ENCODE measurements at regions of chr19 and their contacts with region 1.

Region 1: DNA sequence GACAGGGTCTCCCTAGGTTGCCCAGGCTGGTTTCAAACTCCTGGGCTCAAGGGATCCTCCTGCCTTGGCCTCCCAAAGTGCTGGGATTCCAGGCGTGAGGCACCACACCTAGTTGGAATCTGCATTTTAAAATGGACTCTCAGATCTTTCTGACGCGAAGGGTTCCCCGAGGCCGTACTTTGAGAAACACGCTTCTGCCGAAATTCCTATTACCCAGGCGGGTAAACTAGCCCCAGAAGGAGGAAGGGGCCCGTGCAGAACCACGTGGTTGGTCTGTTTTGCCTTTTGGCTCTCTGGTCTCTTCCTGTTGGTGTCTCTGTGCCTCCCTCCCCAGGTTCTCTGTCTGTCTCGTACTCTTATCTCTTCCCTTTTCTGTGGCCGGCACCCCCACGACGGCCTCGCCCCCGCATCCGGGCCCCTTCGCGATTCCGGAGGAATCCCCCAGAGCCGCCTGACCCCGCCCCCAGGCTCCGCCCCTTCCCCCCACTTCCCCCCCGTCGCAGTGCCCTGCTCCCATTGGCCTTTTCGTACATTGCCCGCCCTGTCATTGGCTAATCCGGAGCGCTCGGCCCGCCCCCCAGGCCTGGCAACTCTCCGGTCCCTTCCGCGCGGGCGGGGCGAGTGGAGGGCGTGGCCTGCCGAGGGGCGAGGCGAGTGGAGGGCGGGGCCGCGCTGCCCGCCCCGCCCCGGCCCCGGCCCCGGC is at the start of gene TNFAIP8L1:
- DNase-seq: peak; percentile 98 to 99
- ATAC-seq: peak; percentile 93 to 99 (median 94)
- H3K4me3 ChIP-seq: peak within 1 kb of the TSS; percentile 78
- H3K4me3 Mint-ChIP-seq: peak within 1 kb of the TSS; percentile 96
- H3K27ac ChIP-seq: peak within 1 kb of the TSS; percentile 91
- H3K27ac Mint-ChIP-seq: peak within 1 kb of the TSS; percentile 94 to 99
- H3K4me1 ChIP-seq: peaks cover 42% of the 10 kb centered on the region
- H3K4me1 Mint-ChIP-seq: peaks cover 9 to 26% of the 10 kb centered on the region in 2 donors
- H3K27me3 ChIP-seq: no peaks in the 10 kb centered on the region
- H3K27me3 Mint-ChIP-seq: no peaks in the 10 kb centered on the region
- CTCF ChIP-seq: no peak
- total RNA-seq, gene TNFAIP8L1: 8.5 to 13.5 (median 13.3) TPM

Region 2: DNA sequence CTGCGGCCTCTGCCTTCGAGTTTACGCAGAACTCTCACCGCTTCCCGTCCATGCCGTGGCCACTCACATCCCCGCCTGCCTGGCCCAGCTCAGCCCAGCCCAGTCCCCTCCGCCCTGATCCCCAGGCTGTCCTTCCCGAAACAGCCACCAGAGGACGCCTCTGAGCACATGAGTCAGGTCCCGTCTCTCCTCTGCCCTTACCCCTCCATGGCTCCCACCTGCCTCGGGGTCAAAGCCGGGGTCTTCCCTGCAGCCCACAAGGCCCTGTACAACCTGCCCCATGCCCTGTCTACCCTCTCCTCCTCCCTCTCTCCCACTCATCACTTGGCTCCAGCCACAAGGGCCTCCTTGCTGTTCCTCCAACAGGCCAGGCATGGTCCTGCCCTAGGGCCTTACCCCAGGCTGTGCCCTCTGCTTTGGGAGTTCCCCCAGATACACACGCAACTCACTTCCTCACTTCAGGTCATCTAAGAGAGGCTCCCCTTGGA is 71.4 kb before region 1 on chr19:
- intact Hi-C with region 1: loop called (anchors 1 kb)
- DNase-seq: peak; percentile 58 to 74
- ATAC-seq: peak; percentile 57 to 80 (median 73)
- H3K4me3 ChIP-seq: no peak overlapping the region
- H3K4me3 Mint-ChIP-seq: no peak overlapping the region
- H3K27ac ChIP-seq: no peak overlapping the region
- H3K27ac Mint-ChIP-seq: peak overlapping the region in 1 of 2 donors; percentile 18
- H3K4me1 ChIP-seq: no peaks in the 10 kb centered on the region
- H3K4me1 Mint-ChIP-seq: peaks cover 0 to 8% of the 10 kb centered on the region in 2 donors
- H3K27me3 ChIP-seq: no peaks in the 10 kb centered on the region
- H3K27me3 Mint-ChIP-seq: peaks cover 0 to 5% of the 10 kb centered on the region in 2 donors
- CTCF ChIP-seq: peak; percentile 63

Region 3: GRCh38 chr19:4576016-4576933 is 62.7 kb before region 1 on chr19:
- intact Hi-C with region 1: loop called (anchors 1 kb)
- DNase-seq: peak; percentile 62 to 77
- ATAC-seq: peak; percentile 62 to 76 (median 71)
- H3K4me3 ChIP-seq: no peak overlapping the region
- H3K4me3 Mint-ChIP-seq: no peak overlapping the region
- H3K27ac ChIP-seq: no peak overlapping the region
- H3K27ac Mint-ChIP-seq: no peak overlapping the region
- H3K4me1 ChIP-seq: peaks cover 4% of the 10 kb centered on the region
- H3K4me1 Mint-ChIP-seq: peaks cover 0 to 3% of the 10 kb centered on the region in 2 donors
- H3K27me3 ChIP-seq: peaks cover 14% of the 10 kb centered on the region
- H3K27me3 Mint-ChIP-seq: peaks cover 21 to 32% of the 10 kb centered on the region in 2 donors
- CTCF ChIP-seq: peak; percentile 67

Region 4: GRCh38 chr19:4597975-4598671 is 40.9 kb before region 1 on chr19:
- intact Hi-C with region 1: loop called (anchors 5 kb)
- DNase-seq: peak; percentile 50 to 74
- ATAC-seq: peak; percentile 85 to 90 (median 88)
- H3K4me3 ChIP-seq: no peak overlapping the region
- H3K4me3 Mint-ChIP-seq: peak overlapping the region; percentile 76
- H3K27ac ChIP-seq: no peak overlapping the region
- H3K27ac Mint-ChIP-seq: peak overlapping the region in 1 of 2 donors; percentile 69
- H3K4me1 ChIP-seq: peaks cover 17% of the 10 kb centered on the region
- H3K4me1 Mint-ChIP-seq: peaks cover 4 to 13% of the 10 kb centered on the region in 2 donors
- H3K27me3 ChIP-seq: peaks cover 17% of the 10 kb centered on the region
- H3K27me3 Mint-ChIP-seq: peaks cover 0 to 10% of the 10 kb centered on the region in 2 donors
- CTCF ChIP-seq: no peak